Posterior cingulate gyrus (tissue), 11 donors: ENCODE measurements at regions of chr1 and their contacts with region 1.

Region 1: DNA sequence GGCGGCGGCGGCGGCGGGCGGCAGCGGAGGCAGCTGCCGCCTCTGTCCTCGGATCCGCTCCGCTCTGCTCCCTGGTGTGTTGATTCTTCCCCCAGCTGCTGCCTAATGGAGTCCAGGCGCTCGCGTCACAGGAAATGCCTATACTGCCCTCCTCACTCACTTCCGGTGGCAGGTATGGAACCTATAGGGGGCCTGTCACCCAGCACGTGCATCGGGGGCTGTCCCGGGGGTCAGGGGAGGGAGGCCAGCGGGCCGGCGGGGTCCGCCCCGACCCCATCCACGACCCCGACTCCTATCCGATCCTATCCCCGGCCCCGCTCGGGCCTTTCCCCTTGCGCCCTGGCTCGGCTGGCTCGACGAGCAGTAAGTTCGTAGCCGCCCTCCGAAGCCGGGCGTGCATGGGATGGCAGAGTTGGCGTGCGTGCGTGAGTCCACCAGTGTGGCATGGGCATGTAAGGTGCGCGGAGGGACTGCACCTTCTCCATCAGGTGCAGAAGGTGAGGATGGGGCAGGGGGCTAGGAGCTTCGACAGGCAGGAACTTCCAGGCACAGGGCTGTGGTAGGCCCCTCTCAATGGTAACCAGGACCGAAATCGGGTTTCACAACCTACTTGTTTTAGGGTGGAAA is at the start of gene WDR26:
- DNase-seq: peak; percentile 77 to 98 (median 88)

Region 2: DNA sequence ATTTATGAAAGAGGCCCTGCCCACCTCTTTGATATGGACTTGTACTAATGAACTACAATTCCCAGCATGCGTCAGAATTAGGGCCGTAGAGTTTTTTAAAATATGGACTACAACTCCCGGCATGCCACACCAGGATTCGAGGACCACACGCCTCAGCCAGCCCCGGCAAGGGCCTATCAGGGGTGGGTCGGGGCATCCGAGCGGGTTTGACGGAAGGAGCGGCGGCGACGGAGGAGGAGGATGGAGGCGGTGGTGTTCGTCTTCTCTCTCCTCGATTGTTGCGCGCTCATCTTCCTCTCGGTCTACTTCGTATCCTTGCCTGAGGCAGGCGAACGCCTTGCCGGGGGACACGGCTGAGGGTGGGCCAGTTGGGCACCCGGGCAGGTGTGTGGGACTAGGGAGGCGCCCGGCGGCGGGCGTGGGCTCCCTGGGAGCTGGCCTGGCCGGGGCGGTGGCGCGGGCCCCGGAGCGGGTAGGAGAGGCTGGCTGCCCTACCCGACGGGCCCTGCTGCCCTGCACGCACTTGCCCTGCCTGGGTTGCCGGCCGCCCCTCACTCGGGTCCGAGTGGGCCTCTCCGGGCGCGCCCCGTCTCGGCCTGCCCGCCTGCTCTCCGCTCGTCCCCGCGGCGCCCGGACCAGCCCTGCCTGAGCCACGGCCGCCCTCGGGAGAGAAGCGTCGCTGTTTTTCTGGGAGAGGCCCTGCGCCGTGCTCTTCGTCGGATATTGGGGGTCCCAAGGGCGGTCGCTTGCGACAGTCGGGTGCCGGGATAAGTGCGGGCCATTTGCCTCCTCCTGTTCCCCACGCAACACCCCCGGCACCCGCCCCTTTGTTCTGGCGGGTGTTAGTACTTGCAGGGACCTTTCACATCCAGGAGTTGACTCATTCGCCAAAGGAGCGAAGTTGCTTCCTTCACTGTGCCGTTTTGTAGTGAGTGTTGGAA is 77.8 kb before region 1 on chr1 and contains the start of gene CNIH4:
- intact Hi-C with region 1: loop called (anchors 2 kb)
- DNase-seq: peak; percentile 81 to 98 (median 91)

Region 3: GRCh38 chr1:224458996-224459395 is 24.2 kb after region 1 on chr1:
- intact Hi-C with region 1: no loop called
- DNase-seq: peak in 1 of 10 donors; percentile 21